ENCODE measurements at regions of chr7 and their contacts with region 1.

Region 1: GRCh38 chr7:141701489-141702046 is 398 bp downstream of the DENND11 start:
- DNase-seq: no peak
- ATAC-seq: peak; percentile 66
- H3K4me3 ChIP-seq: peak overlapping the region; percentile 88
- H3K27ac ChIP-seq: peak overlapping the region; percentile 37; the same call in 1 of the 2 replicates
- H3K4me1 ChIP-seq: peaks cover 1% of the 10 kb centered on the region; the same call in 1 of the 2 replicates
- H3K27me3 ChIP-seq: peaks cover 3% of the 10 kb centered on the region; the same call in 1 of the 2 replicates
- CTCF ChIP-seq: no peak
- POLR2A ChIP-seq: no peak
- RAD21 ChIP-seq: no peak

Region 2: GRCh38 chr7:141301544-141301943 is 400.0 kb before region 1 on chr7:
- CTCF ChIA-PET with region 1: no interaction called
- POLR2A ChIA-PET with region 1: no interaction called
- dilution Hi-C with region 1: no loop called
- in situ Hi-C with region 1: no loop called
- intact Hi-C with region 1: no loop called
- DNase-seq: no peak
- ATAC-seq: no peak
- H3K4me3 ChIP-seq: no peak overlapping the region
- H3K27ac ChIP-seq: no peak overlapping the region
- H3K4me1 ChIP-seq: no peaks in the 10 kb centered on the region
- H3K27me3 ChIP-seq: no peaks in the 10 kb centered on the region
- CTCF ChIP-seq: no peak
- POLR2A ChIP-seq: no peak
- RAD21 ChIP-seq: no peak

Region 3: DNA sequence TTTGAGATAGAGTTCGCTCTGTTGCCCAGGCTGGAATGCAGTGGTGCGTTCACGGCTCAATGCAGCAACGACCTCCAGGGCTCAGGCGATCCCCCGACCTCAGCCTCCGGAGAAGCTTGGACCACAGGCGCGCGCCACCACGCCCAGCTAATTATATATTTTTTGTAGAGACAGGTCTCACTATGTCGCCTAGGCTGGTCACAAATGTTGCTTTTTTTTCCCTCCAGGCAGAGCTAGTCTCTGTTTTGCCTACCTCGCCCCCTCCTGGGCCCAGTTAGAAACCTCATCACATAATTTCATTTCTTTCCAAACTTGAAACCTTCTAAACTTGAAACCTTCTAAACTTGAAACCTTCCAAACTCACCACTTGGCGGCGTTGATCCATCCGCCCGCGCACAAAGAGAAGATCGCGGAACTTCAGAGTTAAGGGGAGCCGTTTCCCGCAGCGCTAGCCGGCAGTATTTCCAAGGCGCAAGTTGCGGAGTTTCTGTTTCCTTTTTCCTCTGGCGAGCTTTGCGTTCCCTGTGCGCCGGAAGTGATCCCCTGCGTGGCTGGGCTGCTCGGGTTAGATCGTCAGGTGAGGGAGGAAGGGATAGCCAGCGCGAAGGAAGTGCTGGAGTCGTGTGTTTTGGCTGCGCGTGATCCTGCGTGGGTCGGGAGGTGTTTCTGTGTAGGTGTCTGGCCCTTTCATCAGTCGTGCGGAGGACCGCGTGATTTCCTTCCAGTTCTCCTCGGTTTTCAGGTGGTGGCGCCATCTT is 36.4 kb after region 1 on chr7 and contains the start of gene SSBP1:
- CTCF ChIA-PET with region 1: interaction called, 5 read pairs
- POLR2A ChIA-PET with region 1: no interaction called
- dilution Hi-C with region 1: no loop called
- in situ Hi-C with region 1: no loop called
- intact Hi-C with region 1: loop called (anchors 2 kb)
- DNase-seq: peak; percentile 96
- ATAC-seq: peak; percentile 97
- H3K4me3 ChIP-seq: peak within 1 kb of the TSS; percentile 65
- H3K27ac ChIP-seq: peak within 1 kb of the TSS; percentile 70
- H3K4me1 ChIP-seq: no peaks in the 10 kb centered on the region; the same call in 1 of the 2 replicates
- H3K27me3 ChIP-seq: no peaks in the 10 kb centered on the region
- CTCF ChIP-seq: peak; percentile 96
- POLR2A ChIP-seq: peak; percentile 88
- RAD21 ChIP-seq: peak; percentile 36
- total RNA-seq, gene SSBP1: 204 and 234 TPM in 2 replicates

Measured in IMR-90 (cell line).